Left colon (tissue), 2 donors: ENCODE measurements at regions of chr16 and their contacts with region 1.

Region 1: GRCh38 chr16:8204769-8205168 is 385.5 kb downstream of the TMEM114 start:
- DNase-seq: no peak
- ATAC-seq: no peak

Region 2: DNA sequence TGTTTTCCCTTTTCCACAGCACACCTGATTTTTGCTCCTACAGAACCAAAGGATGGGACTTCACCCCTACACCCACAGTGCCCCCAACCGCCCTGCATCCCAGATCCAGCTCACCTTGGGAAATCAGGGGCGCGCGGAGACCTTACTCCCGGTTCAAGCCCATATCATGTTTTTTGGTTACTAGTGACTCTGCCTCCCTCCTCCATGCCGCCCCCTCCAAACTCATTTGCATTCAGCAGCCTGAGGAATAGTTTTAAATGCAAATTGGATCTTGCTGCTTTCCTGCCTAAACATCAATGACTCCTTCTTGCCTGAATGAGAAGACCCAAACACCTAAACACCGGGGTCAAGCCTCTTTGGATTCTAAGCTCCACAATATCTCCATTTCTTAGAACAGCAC is 53.8 kb after region 1 on chr16:
- intact Hi-C with region 1: loop called in 1 of 2 experiments (anchors 5 kb)
- DNase-seq: no peak
- ATAC-seq: no peak

Region 3: GRCh38 chr16:8326249-8326648 is 121.5 kb after region 1 on chr16:
- intact Hi-C with region 1: no loop called
- DNase-seq: no peak
- ATAC-seq: no peak